GM12878 (cell line): ENCODE measurements at regions of chr11 and their contacts with region 1.

Region 1: DNA sequence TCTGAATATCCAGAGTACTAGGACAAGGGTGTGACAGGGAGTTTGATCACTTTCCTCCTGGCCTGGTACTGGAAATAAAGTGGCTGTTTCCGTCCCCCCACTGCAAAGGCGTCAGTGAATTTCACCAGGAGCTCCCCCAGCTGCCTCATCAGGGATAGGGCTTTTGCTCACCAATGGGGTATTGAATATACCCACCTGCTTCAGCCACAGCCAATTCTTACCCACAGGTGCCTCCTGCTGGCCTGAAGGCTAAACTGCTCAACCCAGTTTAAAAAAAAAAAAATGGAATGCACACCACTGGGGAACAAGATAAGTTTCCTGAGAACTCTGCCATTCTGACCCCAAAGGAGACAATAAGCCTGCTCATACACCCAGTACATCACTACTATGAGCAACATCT is 65.3 kb upstream of the MS4A8 start:
- DNase-seq: peak; percentile 19
- ATAC-seq: peak; percentile 85
- H3K4me3 ChIP-seq: no peak overlapping the region
- H3K27ac ChIP-seq: 0 out of 2 replicates have a peak overlapping the region, but pooled peaks have one; percentile 2
- H3K4me1 ChIP-seq: peaks cover 27% of the 10 kb centered on the region
- H3K27me3 ChIP-seq: no peaks in the 10 kb centered on the region
- CTCF ChIP-seq: peak; percentile 43 to 60 (median 56)
- EP300 ChIP-seq: no peak
- POLR2A ChIP-seq: no peak
- RAD21 ChIP-seq: peak; percentile 76

Region 2: DNA sequence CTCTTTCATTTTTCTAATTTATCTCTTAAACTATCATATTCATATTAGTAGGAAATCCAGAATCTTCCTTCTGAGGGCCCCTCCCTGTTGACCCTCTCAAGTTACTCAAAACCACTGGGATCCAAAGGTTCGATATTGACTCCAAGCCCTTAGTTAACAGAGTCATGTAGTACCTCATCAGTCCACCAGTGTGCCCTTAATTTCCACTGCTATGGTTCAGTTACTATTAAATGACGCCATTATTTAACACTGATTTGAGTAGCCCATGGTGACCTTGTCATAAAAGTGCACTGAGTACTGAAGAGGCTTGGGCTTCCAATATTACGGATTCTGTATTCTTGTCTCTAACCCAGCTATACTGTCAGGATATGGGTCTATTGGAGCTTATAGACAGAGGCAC is 26.6 kb before region 1 on chr11:
- CTCF ChIA-PET with region 1: interaction called, 5 read pairs
- POLR2A ChIA-PET with region 1: no interaction called
- RAD21 ChIA-PET with region 1: no interaction called
- SMC1A ChIA-PET with region 1: interaction called, 12 read pairs
- in situ Hi-C with region 1: no loop called
- intact Hi-C with region 1: no loop called
- DNase-seq: no peak
- ATAC-seq: no peak
- H3K4me3 ChIP-seq: no peak overlapping the region
- H3K27ac ChIP-seq: no peak overlapping the region
- H3K4me1 ChIP-seq: 0 out of 2 replicates have a peak, but pooled peaks cover 5% of the 10 kb centered on the region
- H3K27me3 ChIP-seq: no peaks in the 10 kb centered on the region
- CTCF ChIP-seq: peak in 2 of 3 experiments; percentile 6 to 25; a peak in 1 of 6 replicates
- EP300 ChIP-seq: no peak
- POLR2A ChIP-seq: no peak
- RAD21 ChIP-seq: no peak

Region 3: GRCh38 chr11:60615497-60615896 is 18.6 kb before region 1 on chr11:
- CTCF ChIA-PET with region 1: interaction called, 31 read pairs
- POLR2A ChIA-PET with region 1: no interaction called
- RAD21 ChIA-PET with region 1: interaction called, 18 read pairs
- SMC1A ChIA-PET with region 1: interaction called, 18 read pairs
- in situ Hi-C with region 1: no loop called
- intact Hi-C with region 1: no loop called
- DNase-seq: no peak
- ATAC-seq: no peak
- H3K4me3 ChIP-seq: no peak overlapping the region
- H3K27ac ChIP-seq: no peak overlapping the region
- H3K4me1 ChIP-seq: no peaks in the 10 kb centered on the region
- H3K27me3 ChIP-seq: no peaks in the 10 kb centered on the region
- CTCF ChIP-seq: no peak
- EP300 ChIP-seq: no peak
- POLR2A ChIP-seq: no peak
- RAD21 ChIP-seq: no peak

Region 4: GRCh38 chr11:60700689-60701480 is 66.8 kb after region 1 on chr11:
- CTCF ChIA-PET with region 1: no interaction called
- POLR2A ChIA-PET with region 1: no interaction called
- RAD21 ChIA-PET with region 1: no interaction called
- SMC1A ChIA-PET with region 1: no interaction called
- in situ Hi-C with region 1: no loop called
- intact Hi-C with region 1: no loop called
- DNase-seq: no peak
- ATAC-seq: peak; percentile 87
- H3K4me3 ChIP-seq: no peak overlapping the region
- H3K27ac ChIP-seq: no peak overlapping the region
- H3K4me1 ChIP-seq: no peaks in the 10 kb centered on the region
- H3K27me3 ChIP-seq: no peaks in the 10 kb centered on the region
- CTCF ChIP-seq: peak; percentile 54 to 56 (median 55); a peak in 5 of 6 replicates
- EP300 ChIP-seq: no peak
- POLR2A ChIP-seq: no peak
- RAD21 ChIP-seq: peak; percentile 64

Region 5: DNA sequence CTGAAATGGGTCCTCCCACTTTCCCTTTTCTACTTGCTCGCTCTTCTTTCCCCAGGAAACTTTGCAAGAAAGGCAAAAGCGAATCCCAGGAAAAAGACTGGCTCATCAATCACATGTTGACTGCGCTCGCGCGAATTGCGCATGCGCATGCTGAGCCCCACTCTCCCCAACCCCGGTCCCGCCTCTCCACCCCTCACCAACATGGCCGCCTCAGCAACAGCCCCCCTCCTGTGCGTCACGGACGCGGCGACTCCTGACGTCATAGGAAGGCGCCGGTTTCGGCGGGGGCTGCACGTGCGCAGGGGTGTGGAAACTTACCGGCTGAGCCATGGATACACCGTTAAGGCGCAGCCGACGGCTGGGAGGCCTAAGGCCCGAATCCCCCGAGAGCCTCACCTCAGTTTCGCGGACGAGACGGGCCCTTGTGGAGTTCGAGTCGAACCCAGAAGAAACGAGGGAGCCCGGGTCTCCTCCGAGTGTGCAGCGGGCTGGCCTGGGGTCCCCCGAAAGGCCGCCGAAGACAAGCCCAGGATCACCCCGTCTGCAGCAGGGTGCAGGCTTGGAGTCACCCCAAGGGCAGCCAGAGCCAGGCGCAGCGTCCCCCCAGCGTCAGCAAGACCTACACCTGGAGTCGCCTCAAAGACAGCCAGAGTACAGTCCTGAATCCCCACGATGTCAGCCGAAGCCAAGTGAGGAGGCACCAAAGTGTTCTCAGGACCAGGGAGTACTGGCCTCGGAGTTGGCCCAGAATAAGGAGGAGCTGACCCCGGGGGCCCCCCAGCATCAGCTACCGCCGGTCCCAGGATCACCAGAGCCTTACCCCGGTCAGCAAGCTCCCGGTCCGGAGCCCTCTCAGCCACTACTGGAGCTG is 207.9 kb after region 1 on chr11 and contains the start of gene CCDC86:
- CTCF ChIA-PET with region 1: no interaction called
- POLR2A ChIA-PET with region 1: no interaction called
- RAD21 ChIA-PET with region 1: no interaction called
- SMC1A ChIA-PET with region 1: no interaction called
- in situ Hi-C with region 1: no loop called
- intact Hi-C with region 1: no loop called
- DNase-seq: peak; percentile 78
- ATAC-seq: peak; percentile 87
- H3K4me3 ChIP-seq: peak within 1 kb of the TSS; percentile 92
- H3K27ac ChIP-seq: peak within 1 kb of the TSS; percentile 72
- H3K4me1 ChIP-seq: peaks cover 4% of the 10 kb centered on the region
- H3K27me3 ChIP-seq: no peaks in the 10 kb centered on the region
- CTCF ChIP-seq: no peak
- EP300 ChIP-seq: peak in 1 of 2 experiments; percentile 18; a peak in 1 of 4 replicates
- POLR2A ChIP-seq: peak; percentile 73
- RAD21 ChIP-seq: no peak
- polyA plus RNA-seq, gene CCDC86: 2.0 to 4.4 TPM

Region 6: GRCh38 chr11:61161190-61162091 is 527.3 kb after region 1 on chr11 and contains the start of gene VPS37C:
- CTCF ChIA-PET with region 1: no interaction called
- POLR2A ChIA-PET with region 1: no interaction called
- RAD21 ChIA-PET with region 1: no interaction called
- SMC1A ChIA-PET with region 1: no interaction called
- in situ Hi-C with region 1: no loop called
- intact Hi-C with region 1: no loop called
- DNase-seq: peak; percentile 71
- ATAC-seq: peak; percentile 80
- H3K4me3 ChIP-seq: peak within 1 kb of the TSS; percentile 86
- H3K27ac ChIP-seq: peak within 1 kb of the TSS; percentile 96
- H3K4me1 ChIP-seq: peaks cover 39% of the 10 kb centered on the region
- H3K27me3 ChIP-seq: no peaks in the 10 kb centered on the region
- CTCF ChIP-seq: no peak
- EP300 ChIP-seq: peak in 1 of 2 experiments; percentile 27; a peak in 1 of 4 replicates
- POLR2A ChIP-seq: peak; percentile 86
- RAD21 ChIP-seq: no peak
- polyA plus RNA-seq, gene VPS37C: 0.39 to 0.88 TPM